Naive thymus-derived CD4-positive, alpha-beta T cell (primary cell): ENCODE measurements at regions of chr1 and their contacts with region 1.

Region 1: DNA sequence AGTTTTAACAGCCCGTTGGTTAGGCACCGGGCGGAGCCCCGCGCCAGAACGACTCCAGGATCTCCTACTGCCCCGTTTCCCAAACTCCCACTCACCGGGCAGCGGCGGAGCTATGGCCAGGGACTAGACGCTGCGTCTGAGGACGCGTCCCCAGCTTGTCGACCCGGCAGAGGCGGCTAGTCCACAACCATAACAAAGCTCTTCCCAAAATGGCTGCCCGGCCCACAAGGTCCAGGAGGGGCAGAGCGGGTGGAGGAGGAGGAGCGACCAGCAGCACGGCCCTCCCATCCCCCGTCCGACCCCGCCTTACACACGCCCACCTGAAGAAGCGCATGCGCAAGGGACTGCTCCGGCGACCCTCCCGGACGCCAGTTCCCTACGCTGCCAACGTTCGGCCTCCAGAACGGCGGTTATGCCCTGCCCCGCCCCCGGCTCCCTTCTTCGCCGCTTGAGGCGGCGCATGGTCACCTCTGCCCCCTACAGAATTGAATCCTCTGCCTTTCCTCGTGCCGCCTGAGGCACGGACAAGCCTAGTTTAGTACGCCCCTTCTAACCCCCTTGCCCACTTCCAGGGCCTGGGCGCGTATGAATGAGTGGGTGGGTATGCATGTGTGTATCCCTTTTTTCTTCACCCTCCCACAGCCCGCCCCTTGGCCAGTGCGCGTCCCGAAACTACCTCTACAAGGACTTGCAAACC is at the start of gene GPBP1L1:
- DNase-seq: peak; percentile 94 to 98 (median 97)
- ATAC-seq: peak; percentile 85
- H3K4me3 ChIP-seq: peak within 1 kb of the TSS; percentile 86
- H3K4me3 Mint-ChIP-seq: peak within 1 kb of the TSS; percentile 95 to 100 (median 99)
- H3K27ac ChIP-seq: peak within 1 kb of the TSS; percentile 94
- H3K27ac Mint-ChIP-seq: peak within 1 kb of the TSS; percentile 99 to 100 (median 100)
- H3K4me1 ChIP-seq: peaks cover 29 to 35% of the 10 kb centered on the region in 2 donors
- H3K4me1 Mint-ChIP-seq: peaks cover 21 to 66% (median 50%) of the 10 kb centered on the region in 7 donors
- H3K27me3 ChIP-seq: no peaks in the 10 kb centered on the region
- H3K27me3 Mint-ChIP-seq: no peaks in the 10 kb centered on the region
- total RNA-seq, gene GPBP1L1: 110 to 180 (median 122) TPM

Region 2: DNA sequence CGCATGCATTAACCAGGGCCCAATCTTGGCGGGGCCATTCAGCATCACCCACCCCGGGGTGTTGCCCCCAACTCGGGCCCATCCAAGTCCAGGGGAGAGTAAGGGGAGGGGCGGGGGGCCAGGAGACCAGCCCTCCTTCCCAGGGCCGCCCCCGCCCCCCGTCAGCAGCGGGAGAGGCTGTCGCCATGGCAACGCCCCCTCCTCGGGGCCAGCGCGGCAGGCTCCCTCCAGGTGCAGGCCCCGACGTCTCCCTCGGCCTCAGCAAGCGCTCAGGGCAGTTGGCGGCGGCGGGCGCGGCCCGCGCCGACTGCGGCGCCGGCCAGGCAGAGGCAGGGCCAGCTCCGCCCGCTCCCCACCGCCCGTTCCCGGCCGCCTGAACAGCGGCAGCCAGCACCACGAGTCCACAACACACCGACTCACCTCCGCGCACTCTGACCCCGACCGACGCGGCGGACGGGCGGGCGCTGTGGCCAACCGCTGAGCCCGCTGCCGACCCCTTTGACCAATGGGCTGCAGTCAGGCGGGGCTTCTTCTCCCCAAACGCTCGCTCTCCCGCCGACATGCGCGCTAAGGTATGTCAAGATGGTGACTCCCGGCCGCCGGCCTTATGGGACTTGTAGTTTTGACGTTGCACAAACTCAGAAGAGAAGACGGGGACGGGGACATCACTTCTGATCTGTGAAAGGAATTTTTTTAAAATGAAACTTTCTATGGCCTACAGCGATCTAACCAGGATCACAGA is 1331.5 kb before region 1 on chr1 and contains the start of gene ERI3:
- CTCF ChIA-PET with region 1: no interaction called
- POLR2A ChIA-PET with region 1: no interaction called
- intact Hi-C with region 1: loop called in 1 of 2 experiments (anchors 10 kb)
- DNase-seq: peak; percentile 91 to 97 (median 95)
- ATAC-seq: peak; percentile 100
- H3K4me3 ChIP-seq: peak within 1 kb of the TSS; percentile 83
- H3K4me3 Mint-ChIP-seq: peak within 1 kb of the TSS; percentile 83 to 98 (median 96)
- H3K27ac ChIP-seq: peak within 1 kb of the TSS; percentile 82
- H3K27ac Mint-ChIP-seq: peak within 1 kb of the TSS; percentile 87 to 94 (median 90)
- H3K4me1 ChIP-seq: peaks cover 11 to 12% of the 10 kb centered on the region in 2 donors
- H3K4me1 Mint-ChIP-seq: peaks cover 15 to 52% (median 46%) of the 10 kb centered on the region in 7 donors
- H3K27me3 ChIP-seq: no peaks in the 10 kb centered on the region
- H3K27me3 Mint-ChIP-seq: no peaks in the 10 kb centered on the region
- total RNA-seq, gene ERI3: 28.7 to 37.7 (median 36.2) TPM

Region 3: DNA sequence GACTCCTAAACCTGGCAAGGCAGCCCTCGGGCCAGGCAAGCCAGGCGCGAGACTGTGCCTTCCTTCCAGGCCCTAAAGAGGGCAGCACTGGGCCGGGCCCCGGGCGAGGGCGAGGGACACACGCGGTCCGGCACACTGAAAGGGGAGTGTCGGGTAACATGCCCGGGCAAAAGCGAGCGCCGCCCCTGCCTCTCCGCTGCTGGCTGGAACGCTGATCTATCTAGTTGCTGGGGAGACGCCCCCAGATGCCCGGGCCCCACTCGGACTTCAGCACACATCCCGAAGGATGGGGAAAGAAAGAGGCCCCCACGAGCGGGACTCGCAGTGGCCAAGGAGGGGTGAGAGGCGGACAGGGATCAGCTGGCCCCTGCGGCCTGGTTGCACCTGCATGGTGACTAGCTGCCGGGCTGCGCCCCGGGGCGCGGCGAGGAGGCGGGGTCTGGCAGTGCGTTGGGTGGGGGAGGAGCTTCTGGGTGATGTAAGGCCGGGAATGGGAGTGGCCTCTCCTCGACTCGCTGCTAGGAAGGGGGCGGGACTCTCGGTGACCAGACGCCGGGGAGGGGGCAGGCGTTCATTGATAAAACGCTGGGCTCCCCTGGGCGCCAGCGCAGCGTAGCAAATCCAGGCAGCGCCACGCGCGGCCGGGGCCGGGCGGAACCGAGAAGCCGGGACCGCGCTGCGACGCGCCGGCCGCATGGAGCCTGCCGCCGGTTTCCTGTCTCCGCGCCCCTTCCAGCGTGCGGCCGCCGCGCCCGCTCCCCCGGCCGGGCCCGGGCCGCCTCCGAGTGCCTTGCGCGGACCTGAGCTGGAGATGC is 886.5 kb before region 1 on chr1 and contains the start of gene PLK3:
- CTCF ChIA-PET with region 1: no interaction called
- POLR2A ChIA-PET with region 1: interaction called, 3 read pairs
- intact Hi-C with region 1: loop called (anchors 2 kb)
- DNase-seq: peak; percentile 93 to 99 (median 98)
- ATAC-seq: peak; percentile 92
- H3K4me3 ChIP-seq: peak within 1 kb of the TSS; percentile 66
- H3K4me3 Mint-ChIP-seq: peak within 1 kb of the TSS; percentile 85 to 98 (median 93)
- H3K27ac ChIP-seq: peak within 1 kb of the TSS; percentile 94
- H3K27ac Mint-ChIP-seq: peak within 1 kb of the TSS; percentile 84 to 99 (median 98)
- H3K4me1 ChIP-seq: peaks cover 17 to 24% of the 10 kb centered on the region in 2 donors
- H3K4me1 Mint-ChIP-seq: peaks cover 19 to 43% (median 33%) of the 10 kb centered on the region in 7 donors
- H3K27me3 ChIP-seq: no peaks in the 10 kb centered on the region
- H3K27me3 Mint-ChIP-seq: no peaks in the 10 kb centered on the region
- total RNA-seq, gene PLK3: 92.8 to 456 (median 142) TPM

Region 4: GRCh38 chr1:45134468-45134873 is 552.0 kb before region 1 on chr1:
- CTCF ChIA-PET with region 1: no interaction called
- POLR2A ChIA-PET with region 1: no interaction called
- intact Hi-C with region 1: no loop called
- DNase-seq: no peak
- ATAC-seq: no peak
- H3K4me3 ChIP-seq: no peak overlapping the region
- H3K4me3 Mint-ChIP-seq: no peak overlapping the region
- H3K27ac ChIP-seq: no peak overlapping the region
- H3K27ac Mint-ChIP-seq: no peak overlapping the region
- H3K4me1 ChIP-seq: no peaks in the 10 kb centered on the region
- H3K4me1 Mint-ChIP-seq: peaks cover 0 to 12% (median 5%) of the 10 kb centered on the region in 7 donors
- H3K27me3 ChIP-seq: no peaks in the 10 kb centered on the region
- H3K27me3 Mint-ChIP-seq: no peaks in the 10 kb centered on the region

Region 5: GRCh38 chr1:45499415-45499769 is 187.1 kb before region 1 on chr1:
- CTCF ChIA-PET with region 1: no interaction called
- POLR2A ChIA-PET with region 1: interaction called, 16 read pairs
- intact Hi-C with region 1: loop called in 1 of 2 experiments (anchors 1 kb)
- DNase-seq: peak in 1 of 9 donors; percentile 17
- ATAC-seq: no peak
- H3K4me3 ChIP-seq: peak overlapping the region; percentile 68
- H3K4me3 Mint-ChIP-seq: peak overlapping the region; percentile 91 to 99 (median 94)
- H3K27ac ChIP-seq: peak overlapping the region; percentile 70
- H3K27ac Mint-ChIP-seq: peak overlapping the region; percentile 87 to 97 (median 92)
- H3K4me1 ChIP-seq: peaks cover 5 to 17% of the 10 kb centered on the region in 2 donors
- H3K4me1 Mint-ChIP-seq: peaks cover 24 to 38% (median 33%) of the 10 kb centered on the region in 7 donors
- H3K27me3 ChIP-seq: no peaks in the 10 kb centered on the region
- H3K27me3 Mint-ChIP-seq: no peaks in the 10 kb centered on the region

Region 6: GRCh38 chr1:45658171-45658570 is 28.3 kb before region 1 on chr1:
- CTCF ChIA-PET with region 1: no interaction called
- POLR2A ChIA-PET with region 1: interaction called, 12 read pairs
- intact Hi-C with region 1: no loop called
- DNase-seq: no peak
- ATAC-seq: no peak
- H3K4me3 ChIP-seq: no peak overlapping the region
- H3K4me3 Mint-ChIP-seq: no peak overlapping the region
- H3K27ac ChIP-seq: no peak overlapping the region
- H3K27ac Mint-ChIP-seq: peak overlapping the region in 2 of 9 donors; percentile 34 to 63
- H3K4me1 ChIP-seq: no peaks in the 10 kb centered on the region
- H3K4me1 Mint-ChIP-seq: peaks cover 0 to 22% (median 6%) of the 10 kb centered on the region in 7 donors
- H3K27me3 ChIP-seq: no peaks in the 10 kb centered on the region
- H3K27me3 Mint-ChIP-seq: no peaks in the 10 kb centered on the region

Region 7: DNA sequence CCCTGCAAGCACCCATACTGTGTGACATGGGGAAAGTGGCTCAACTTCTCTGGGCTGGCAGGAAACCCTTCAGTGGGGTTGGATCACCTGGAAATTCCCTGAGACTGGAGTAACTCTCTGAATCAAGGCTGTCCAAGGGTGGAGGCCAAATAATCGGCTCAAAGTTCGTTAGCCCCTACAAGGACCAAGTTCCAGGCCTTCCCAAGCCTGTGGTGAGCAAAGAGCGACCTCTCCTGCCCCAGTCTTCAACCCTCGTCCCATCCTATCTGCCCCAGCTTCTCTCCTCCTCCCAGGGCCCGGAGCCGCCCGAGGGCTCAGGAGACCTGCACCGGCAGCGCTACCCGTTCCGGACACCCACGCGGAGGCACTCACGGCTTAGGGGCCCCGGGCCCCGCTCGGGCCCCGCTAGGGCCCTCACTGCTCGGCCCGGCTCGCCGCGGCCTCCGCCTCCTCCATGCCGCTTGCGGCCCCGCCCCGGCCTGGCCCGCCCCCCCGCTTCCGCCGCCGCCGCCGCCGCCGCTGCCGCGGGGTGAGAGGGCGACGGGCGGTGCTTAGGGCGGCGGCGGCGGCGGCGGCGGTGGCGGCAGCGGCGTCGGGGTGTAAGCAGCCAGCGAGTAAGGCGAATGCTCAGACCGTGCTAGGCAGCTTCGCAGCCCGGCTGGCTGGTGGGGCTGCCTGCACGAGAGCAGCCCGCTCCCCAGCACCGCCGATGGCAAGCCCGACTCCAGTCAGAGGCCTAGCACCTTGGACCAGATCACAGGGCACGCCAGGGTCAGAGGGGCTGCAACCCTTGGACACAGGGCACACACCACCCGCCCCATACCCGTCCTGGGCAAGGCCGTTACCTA is 511.7 kb after region 1 on chr1 and contains the start of gene POMGNT1:
- CTCF ChIA-PET with region 1: no interaction called
- POLR2A ChIA-PET with region 1: no interaction called
- intact Hi-C with region 1: loop called in 1 of 2 experiments (anchors 1 kb)
- DNase-seq: peak; percentile 60 to 88 (median 76)
- ATAC-seq: peak; percentile 97
- H3K4me3 ChIP-seq: peak within 1 kb of the TSS; percentile 84
- H3K4me3 Mint-ChIP-seq: peak within 1 kb of the TSS; percentile 78 to 88 (median 84)
- H3K27ac ChIP-seq: peak within 1 kb of the TSS; percentile 90
- H3K27ac Mint-ChIP-seq: peak within 1 kb of the TSS; percentile 44 to 90 (median 83)
- H3K4me1 ChIP-seq: peaks cover 13 to 22% of the 10 kb centered on the region in 2 donors
- H3K4me1 Mint-ChIP-seq: peaks cover 18 to 44% (median 30%) of the 10 kb centered on the region in 7 donors
- H3K27me3 ChIP-seq: no peaks in the 10 kb centered on the region
- H3K27me3 Mint-ChIP-seq: peaks cover 0 to 6% (median 0%) of the 10 kb centered on the region in 5 donors
- total RNA-seq, gene POMGNT1: 35.7 to 58.6 (median 41.9) TPM

Region 8: GRCh38 chr1:47333922-47334764 is 1647.7 kb after region 1 on chr1:
- CTCF ChIA-PET with region 1: no interaction called
- POLR2A ChIA-PET with region 1: no interaction called
- intact Hi-C with region 1: loop called in 1 of 2 experiments (anchors 5 kb)
- DNase-seq: peak; percentile 63 to 82 (median 77)
- ATAC-seq: peak; percentile 93
- H3K4me3 ChIP-seq: peak overlapping the region; percentile 87
- H3K4me3 Mint-ChIP-seq: peak overlapping the region in 6 of 10 donors; percentile 90 to 94 (median 92)
- H3K27ac ChIP-seq: peak overlapping the region; percentile 92
- H3K27ac Mint-ChIP-seq: peak overlapping the region in 6 of 9 donors; percentile 76 to 94 (median 92)
- H3K4me1 ChIP-seq: peaks cover 6 to 16% of the 10 kb centered on the region in 2 donors
- H3K4me1 Mint-ChIP-seq: peaks cover 12 to 34% (median 22%) of the 10 kb centered on the region in 7 donors
- H3K27me3 ChIP-seq: no peaks in the 10 kb centered on the region
- H3K27me3 Mint-ChIP-seq: no peaks in the 10 kb centered on the region